ENCODE measurements at regions of chr3 and their contacts with region 1.

Region 1: GRCh38 chr3:61858056-61858455 is 296.7 kb downstream of the PTPRG start:
- DNase-seq: no peak
- H3K4me3 ChIP-seq: no peak overlapping the region
- CTCF ChIP-seq: peak; percentile 38

Region 2: DNA sequence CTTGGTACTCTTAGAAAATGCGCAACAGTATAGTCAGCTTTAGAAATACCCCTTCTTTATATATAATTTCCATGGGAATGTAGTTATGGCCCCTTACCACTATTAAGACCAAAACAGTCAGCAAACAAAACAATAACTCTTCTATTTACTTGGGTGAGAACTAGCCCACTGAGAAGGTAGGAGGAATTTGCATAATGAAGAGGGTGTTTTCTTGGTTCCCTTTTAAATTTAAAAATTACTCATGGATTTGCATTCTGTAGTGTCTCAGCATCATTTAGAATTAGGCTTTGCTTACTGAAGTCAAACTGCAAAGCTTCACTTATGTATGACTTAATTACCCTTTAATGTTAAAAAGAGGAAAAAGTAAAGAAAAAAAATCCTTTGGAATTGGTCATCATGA is 54.1 kb after region 1 on chr3:
- in situ Hi-C with region 1: no loop called
- DNase-seq: no peak
- H3K4me3 ChIP-seq: no peak overlapping the region
- CTCF ChIP-seq: no peak

Region 3: DNA sequence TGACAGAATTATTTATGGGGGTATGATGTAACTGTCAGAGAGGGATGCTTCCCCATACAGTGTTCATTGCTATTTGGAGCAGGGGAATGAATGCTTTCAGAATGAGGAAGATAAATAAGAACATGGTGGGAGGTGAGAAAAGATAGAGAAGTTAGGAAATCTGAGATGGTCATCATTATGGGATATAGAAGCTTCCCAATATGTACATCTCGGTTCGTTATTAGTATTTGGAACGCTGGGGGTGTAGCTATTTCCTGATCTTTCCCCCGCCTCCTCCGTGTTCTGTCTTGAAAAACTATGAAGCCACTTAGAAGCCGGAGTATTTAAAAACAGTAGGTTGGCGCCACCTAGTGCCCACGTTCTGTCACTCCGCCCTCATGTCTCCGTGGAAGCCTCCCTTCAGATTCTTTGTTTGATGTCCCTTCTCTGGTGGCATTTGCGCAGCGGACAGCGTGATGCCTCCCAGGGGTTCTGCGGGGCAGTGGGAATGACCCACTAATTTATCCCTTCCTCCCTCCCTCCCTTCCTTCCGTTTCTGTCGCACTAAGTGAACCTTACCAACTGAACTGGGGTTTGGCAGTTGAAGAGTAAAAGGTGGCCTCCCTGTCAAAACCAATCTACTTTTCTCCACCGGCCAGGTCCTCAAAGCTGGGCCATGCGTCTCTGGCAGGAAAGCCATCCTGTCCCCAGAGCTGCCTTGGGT is 330.8 kb after region 1 on chr3:
- in situ Hi-C with region 1: loop called (anchors 5 kb)
- DNase-seq: peak; percentile 66
- H3K4me3 ChIP-seq: no peak overlapping the region
- CTCF ChIP-seq: peak; percentile 71

Measured in astrocyte of the cerebellum (primary cell).